CD8-positive, alpha-beta T cell (primary cell): ENCODE measurements at regions of chr14 and their contacts with region 1.

Region 1: DNA sequence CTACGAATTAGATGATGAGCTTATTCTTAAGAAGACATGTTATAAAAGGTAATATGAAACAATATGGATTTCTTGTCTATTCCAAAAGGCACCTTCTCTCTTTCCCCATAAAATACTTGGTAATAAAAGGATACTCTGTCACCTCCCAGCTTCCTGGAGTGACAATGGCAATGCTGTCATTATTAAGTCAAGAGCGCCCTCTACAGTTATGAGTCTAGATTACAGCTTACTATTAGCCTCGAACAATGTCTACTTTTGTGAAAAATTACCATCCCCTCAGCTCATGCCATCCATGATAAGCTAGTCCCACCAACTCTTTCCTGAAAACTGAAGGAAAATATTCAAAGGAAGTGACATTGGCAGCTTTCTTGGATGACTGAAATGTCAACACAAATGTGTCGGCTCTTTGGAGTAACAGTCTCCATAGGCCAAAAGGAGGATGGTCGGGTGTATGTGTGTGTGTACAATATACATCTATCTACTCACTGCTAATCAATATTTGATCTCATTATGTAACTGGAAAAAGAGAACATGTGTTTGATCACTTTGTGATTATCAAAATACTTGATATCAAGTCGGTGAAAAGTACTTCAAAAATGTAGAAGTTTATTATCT is 48.7 kb upstream of the CDKN3 start:
- DNase-seq: peak in 2 of 9 experiments; percentile 13 to 31
- ATAC-seq: no peak
- H3K4me3 ChIP-seq: no peak overlapping the region
- H3K4me3 Mint-ChIP-seq: no peak overlapping the region
- H3K27ac ChIP-seq: no peak overlapping the region
- H3K27ac Mint-ChIP-seq: no peak overlapping the region
- H3K4me1 ChIP-seq: no peaks in the 10 kb centered on the region
- H3K4me1 Mint-ChIP-seq: peaks cover 3% of the 10 kb centered on the region
- H3K27me3 ChIP-seq: no peaks in the 10 kb centered on the region
- H3K27me3 Mint-ChIP-seq: peaks cover 6% of the 10 kb centered on the region
- CTCF ChIP-seq: peak; percentile 54

Region 2: DNA sequence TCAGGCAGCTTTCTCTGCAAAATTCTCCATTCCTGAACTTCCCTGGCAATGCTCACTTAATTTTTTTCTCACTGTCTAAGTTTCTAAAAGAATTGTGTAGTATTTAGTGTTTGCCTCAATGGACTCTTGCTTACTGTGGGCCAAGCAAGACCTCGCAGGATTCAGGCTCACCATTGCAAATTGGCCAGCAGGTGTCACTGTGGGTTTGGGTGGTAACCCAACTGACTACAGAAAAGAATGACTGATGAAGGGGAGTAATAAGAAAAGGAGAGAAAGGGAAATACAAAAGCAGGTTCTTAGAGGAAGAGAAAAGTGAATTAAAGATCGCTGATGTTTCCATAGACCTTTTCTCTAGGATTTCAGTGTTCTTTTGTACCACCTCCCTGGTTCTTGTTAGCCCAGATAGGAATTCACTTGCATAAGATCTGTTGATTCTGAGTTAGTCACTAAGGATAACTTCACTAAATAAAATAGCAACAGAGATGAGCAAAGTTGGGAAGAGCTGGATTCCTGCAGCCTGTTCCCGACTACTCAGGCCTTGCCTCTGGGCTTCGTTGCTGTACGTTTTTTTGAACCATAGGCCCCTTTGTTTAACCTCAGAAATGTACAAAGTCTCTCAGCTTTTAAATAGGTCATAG is 808.5 kb before region 1 on chr14:
- CTCF ChIA-PET with region 1: no interaction called
- POLR2A ChIA-PET with region 1: no interaction called
- intact Hi-C with region 1: loop called in 1 of 2 experiments (anchors 5 kb)
- DNase-seq: peak in 5 of 9 experiments; percentile 5 to 32 (median 25)
- ATAC-seq: no peak
- H3K4me3 ChIP-seq: no peak overlapping the region
- H3K4me3 Mint-ChIP-seq: no peak overlapping the region
- H3K27ac ChIP-seq: no peak overlapping the region
- H3K27ac Mint-ChIP-seq: no peak overlapping the region
- H3K4me1 ChIP-seq: no peaks in the 10 kb centered on the region
- H3K4me1 Mint-ChIP-seq: no peaks in the 10 kb centered on the region
- H3K27me3 ChIP-seq: no peaks in the 10 kb centered on the region
- H3K27me3 Mint-ChIP-seq: no peaks in the 10 kb centered on the region
- CTCF ChIP-seq: no peak

Region 3: GRCh38 chr14:54462048-54462447 is 113.9 kb after region 1 on chr14:
- CTCF ChIA-PET with region 1: no interaction called
- POLR2A ChIA-PET with region 1: no interaction called
- intact Hi-C with region 1: no loop called
- DNase-seq: no peak
- ATAC-seq: no peak
- H3K4me3 ChIP-seq: no peak overlapping the region
- H3K4me3 Mint-ChIP-seq: no peak overlapping the region
- H3K27ac ChIP-seq: no peak overlapping the region
- H3K27ac Mint-ChIP-seq: no peak overlapping the region
- H3K4me1 ChIP-seq: no peaks in the 10 kb centered on the region
- H3K4me1 Mint-ChIP-seq: no peaks in the 10 kb centered on the region
- H3K27me3 ChIP-seq: no peaks in the 10 kb centered on the region
- H3K27me3 Mint-ChIP-seq: no peaks in the 10 kb centered on the region
- CTCF ChIP-seq: no peak

Region 4: DNA sequence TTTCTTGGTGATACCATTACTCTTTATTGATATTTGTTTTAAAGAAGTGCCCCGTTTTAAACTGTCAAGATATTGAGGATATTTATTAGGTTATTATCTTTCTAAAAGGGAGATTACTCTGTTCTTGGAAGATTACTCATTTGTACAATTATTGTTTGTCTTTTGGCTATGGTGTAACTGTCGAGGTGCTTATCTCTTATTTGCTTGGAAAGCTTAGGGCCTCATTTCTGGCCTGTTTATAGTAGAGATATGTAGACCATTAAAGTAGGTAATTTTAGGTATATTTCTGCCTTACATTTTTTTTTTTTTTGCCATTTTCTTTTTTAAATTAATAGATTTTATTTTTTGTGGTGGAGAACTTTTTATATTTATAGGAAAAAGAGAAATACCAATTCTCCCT is 1306.1 kb after region 1 on chr14:
- CTCF ChIA-PET with region 1: no interaction called
- POLR2A ChIA-PET with region 1: no interaction called
- intact Hi-C with region 1: no loop called
- DNase-seq: no peak
- ATAC-seq: no peak
- H3K4me3 ChIP-seq: no peak overlapping the region
- H3K4me3 Mint-ChIP-seq: no peak overlapping the region
- H3K27ac ChIP-seq: no peak overlapping the region
- H3K27ac Mint-ChIP-seq: no peak overlapping the region
- H3K4me1 ChIP-seq: no peaks in the 10 kb centered on the region
- H3K4me1 Mint-ChIP-seq: no peaks in the 10 kb centered on the region
- H3K27me3 ChIP-seq: no peaks in the 10 kb centered on the region
- H3K27me3 Mint-ChIP-seq: no peaks in the 10 kb centered on the region
- CTCF ChIP-seq: no peak